Activated CD4-positive, alpha-beta T cell treated with anti-CD3 and anti-CD28 coated beads for 36 hours (primary cell): ENCODE measurements at regions of chr1 and their contacts with region 1.

Region 1: DNA sequence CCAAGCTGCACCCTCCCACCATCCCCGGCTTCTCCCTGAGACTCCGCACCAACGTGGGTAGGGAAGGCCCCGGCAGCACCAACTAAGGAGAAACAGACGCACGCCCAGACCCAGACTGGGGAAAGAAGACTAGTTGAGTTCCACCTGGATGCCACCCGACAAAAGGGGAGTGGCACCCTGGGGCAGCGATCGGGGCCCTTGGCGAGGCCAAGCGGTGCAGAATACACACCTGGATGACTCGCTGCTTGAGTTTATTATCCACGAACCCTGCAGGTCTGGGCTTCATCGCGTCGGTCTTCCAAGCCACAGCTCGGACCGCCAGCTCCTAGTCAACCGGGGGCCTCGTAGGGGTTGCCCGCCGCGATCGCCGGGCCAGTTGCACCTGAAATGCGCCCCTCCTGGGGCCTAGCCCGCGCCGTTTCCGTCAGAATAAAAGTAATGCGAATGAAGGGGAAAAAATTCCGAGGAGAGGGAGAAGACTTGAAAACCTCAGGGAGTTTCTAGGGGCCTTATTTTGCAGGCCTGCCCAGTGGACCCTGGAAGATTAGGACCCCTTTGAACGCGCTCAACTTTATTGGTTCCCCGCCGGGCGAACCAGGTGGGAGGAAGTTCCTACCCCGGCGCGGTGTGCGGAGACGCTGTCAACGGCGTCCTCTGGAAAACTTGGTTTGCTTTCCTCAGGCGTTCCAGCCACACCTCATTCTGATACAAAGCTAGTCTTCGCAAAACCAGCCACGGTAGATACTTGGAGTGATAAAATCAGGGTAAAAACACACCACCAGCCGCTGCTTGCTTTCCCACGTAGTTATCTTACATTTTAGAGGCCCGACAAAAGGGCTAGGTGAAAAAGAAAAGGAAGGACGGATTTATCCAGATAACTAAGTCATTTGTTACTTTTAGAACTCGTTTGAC is at the start of gene NVL:
- DNase-seq: peak; percentile 89
- ATAC-seq: peak; percentile 81
- H3K4me3 Mint-ChIP-seq: peak within 1 kb of the TSS; percentile 88
- H3K27ac Mint-ChIP-seq: peak within 1 kb of the TSS; percentile 92
- H3K4me1 Mint-ChIP-seq: peaks cover 36% of the 10 kb centered on the region
- H3K27me3 Mint-ChIP-seq: no peaks in the 10 kb centered on the region
- total RNA-seq, gene NVL: 34.2 to 44.1 TPM

Region 2: GRCh38 chr1:223142795-223143536 is 1187.1 kb before region 1 on chr1 and contains the start of gene TLR5:
- CTCF ChIA-PET with region 1: no interaction called
- POLR2A ChIA-PET with region 1: no interaction called
- intact Hi-C with region 1: no loop called
- DNase-seq: peak; percentile 93
- ATAC-seq: peak; percentile 89
- H3K4me3 Mint-ChIP-seq: peak within 1 kb of the TSS; percentile 69
- H3K27ac Mint-ChIP-seq: peak within 1 kb of the TSS; percentile 79
- H3K4me1 Mint-ChIP-seq: peaks cover 30% of the 10 kb centered on the region
- H3K27me3 Mint-ChIP-seq: peaks cover 2% of the 10 kb centered on the region
- total RNA-seq, gene TLR5: 0.21 to 0.56 TPM

Region 3: DNA sequence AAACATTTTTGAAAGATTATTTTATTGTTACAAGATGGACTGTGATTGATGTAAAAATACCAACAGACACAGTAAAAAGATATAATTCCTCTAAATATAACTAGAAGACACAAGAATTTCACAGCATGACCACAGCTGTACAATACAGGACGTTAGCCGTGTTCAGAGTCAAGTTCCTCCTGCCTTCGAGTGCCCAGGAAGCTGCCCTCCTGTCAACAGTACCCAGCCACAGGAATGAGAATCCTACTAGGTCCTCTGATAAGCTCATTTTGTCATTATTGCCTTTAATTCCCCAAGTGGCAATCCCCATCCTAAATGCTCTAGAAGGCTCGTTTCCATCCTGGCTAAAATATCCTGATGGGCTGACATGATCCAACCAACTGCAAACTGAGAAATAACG is 634.2 kb before region 1 on chr1:
- CTCF ChIA-PET with region 1: interaction called, 3 read pairs
- POLR2A ChIA-PET with region 1: no interaction called
- intact Hi-C with region 1: loop called (anchors 1 to 10 kb)
- DNase-seq: no peak
- ATAC-seq: no peak
- H3K4me3 Mint-ChIP-seq: no peak overlapping the region
- H3K27ac Mint-ChIP-seq: no peak overlapping the region
- H3K4me1 Mint-ChIP-seq: peaks cover 9% of the 10 kb centered on the region
- H3K27me3 Mint-ChIP-seq: peaks cover 4% of the 10 kb centered on the region

Region 4: GRCh38 chr1:224113918-224114786 is 215.9 kb before region 1 on chr1 and contains the start of gene FBXO28:
- CTCF ChIA-PET with region 1: interaction called, 52 read pairs
- POLR2A ChIA-PET with region 1: no interaction called
- intact Hi-C with region 1: loop called (anchors 1 kb)
- DNase-seq: peak; percentile 98
- ATAC-seq: peak; percentile 99
- H3K4me3 Mint-ChIP-seq: peak within 1 kb of the TSS; percentile 85
- H3K27ac Mint-ChIP-seq: peak within 1 kb of the TSS; percentile 96
- H3K4me1 Mint-ChIP-seq: peaks cover 25% of the 10 kb centered on the region
- H3K27me3 Mint-ChIP-seq: no peaks in the 10 kb centered on the region
- total RNA-seq, gene FBXO28: 17.1 to 19.7 TPM

Region 5: DNA sequence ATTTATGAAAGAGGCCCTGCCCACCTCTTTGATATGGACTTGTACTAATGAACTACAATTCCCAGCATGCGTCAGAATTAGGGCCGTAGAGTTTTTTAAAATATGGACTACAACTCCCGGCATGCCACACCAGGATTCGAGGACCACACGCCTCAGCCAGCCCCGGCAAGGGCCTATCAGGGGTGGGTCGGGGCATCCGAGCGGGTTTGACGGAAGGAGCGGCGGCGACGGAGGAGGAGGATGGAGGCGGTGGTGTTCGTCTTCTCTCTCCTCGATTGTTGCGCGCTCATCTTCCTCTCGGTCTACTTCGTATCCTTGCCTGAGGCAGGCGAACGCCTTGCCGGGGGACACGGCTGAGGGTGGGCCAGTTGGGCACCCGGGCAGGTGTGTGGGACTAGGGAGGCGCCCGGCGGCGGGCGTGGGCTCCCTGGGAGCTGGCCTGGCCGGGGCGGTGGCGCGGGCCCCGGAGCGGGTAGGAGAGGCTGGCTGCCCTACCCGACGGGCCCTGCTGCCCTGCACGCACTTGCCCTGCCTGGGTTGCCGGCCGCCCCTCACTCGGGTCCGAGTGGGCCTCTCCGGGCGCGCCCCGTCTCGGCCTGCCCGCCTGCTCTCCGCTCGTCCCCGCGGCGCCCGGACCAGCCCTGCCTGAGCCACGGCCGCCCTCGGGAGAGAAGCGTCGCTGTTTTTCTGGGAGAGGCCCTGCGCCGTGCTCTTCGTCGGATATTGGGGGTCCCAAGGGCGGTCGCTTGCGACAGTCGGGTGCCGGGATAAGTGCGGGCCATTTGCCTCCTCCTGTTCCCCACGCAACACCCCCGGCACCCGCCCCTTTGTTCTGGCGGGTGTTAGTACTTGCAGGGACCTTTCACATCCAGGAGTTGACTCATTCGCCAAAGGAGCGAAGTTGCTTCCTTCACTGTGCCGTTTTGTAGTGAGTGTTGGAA is 26.9 kb after region 1 on chr1 and contains the start of gene CNIH4:
- CTCF ChIA-PET with region 1: interaction called, 9 read pairs
- POLR2A ChIA-PET with region 1: no interaction called
- intact Hi-C with region 1: loop called (anchors 1 kb)
- DNase-seq: peak; percentile 95
- ATAC-seq: peak; percentile 98
- H3K4me3 Mint-ChIP-seq: peak within 1 kb of the TSS; percentile 80
- H3K27ac Mint-ChIP-seq: peak within 1 kb of the TSS; percentile 89
- H3K4me1 Mint-ChIP-seq: peaks cover 30% of the 10 kb centered on the region
- H3K27me3 Mint-ChIP-seq: no peaks in the 10 kb centered on the region
- total RNA-seq, gene CNIH4: 29.9 to 49.6 TPM

Region 6: DNA sequence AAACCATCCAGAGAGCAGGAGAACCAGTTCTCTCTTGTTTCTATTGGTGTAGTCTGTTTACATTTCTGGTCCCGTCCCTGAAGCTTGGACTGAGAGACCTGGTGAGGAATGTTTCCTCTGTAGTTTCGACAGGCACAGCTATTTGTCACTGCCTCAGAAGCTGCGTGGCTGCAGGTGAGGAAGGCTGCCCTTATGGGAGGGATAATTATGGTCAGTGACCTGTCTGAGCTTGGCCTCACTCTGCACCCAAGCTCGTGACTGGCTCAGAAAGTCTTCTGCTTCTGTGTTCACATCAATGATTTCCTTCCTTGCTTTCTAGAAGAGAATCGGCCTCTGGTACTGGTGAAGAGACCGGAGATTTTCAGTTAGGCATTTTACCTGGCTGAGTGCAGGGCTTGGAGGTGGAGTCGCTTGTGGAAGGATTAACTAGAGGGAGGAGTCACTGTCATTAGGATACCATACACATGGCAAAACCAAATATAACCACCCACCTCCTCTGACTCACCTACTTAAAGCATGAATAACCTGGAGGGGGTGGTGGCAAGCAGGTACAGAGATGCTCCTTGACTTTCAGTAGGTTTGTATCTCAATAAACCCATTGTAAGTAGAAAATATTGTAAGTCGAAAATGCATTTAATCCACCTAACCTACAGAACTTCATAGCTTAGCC is 124.4 kb after region 1 on chr1:
- CTCF ChIA-PET with region 1: interaction called, 6 read pairs
- POLR2A ChIA-PET with region 1: no interaction called
- intact Hi-C with region 1: loop called (anchors 2 kb)
- DNase-seq: no peak
- ATAC-seq: peak; percentile 37
- H3K4me3 Mint-ChIP-seq: no peak overlapping the region
- H3K27ac Mint-ChIP-seq: no peak overlapping the region
- H3K4me1 Mint-ChIP-seq: peaks cover 19% of the 10 kb centered on the region
- H3K27me3 Mint-ChIP-seq: no peaks in the 10 kb centered on the region

Region 7: DNA sequence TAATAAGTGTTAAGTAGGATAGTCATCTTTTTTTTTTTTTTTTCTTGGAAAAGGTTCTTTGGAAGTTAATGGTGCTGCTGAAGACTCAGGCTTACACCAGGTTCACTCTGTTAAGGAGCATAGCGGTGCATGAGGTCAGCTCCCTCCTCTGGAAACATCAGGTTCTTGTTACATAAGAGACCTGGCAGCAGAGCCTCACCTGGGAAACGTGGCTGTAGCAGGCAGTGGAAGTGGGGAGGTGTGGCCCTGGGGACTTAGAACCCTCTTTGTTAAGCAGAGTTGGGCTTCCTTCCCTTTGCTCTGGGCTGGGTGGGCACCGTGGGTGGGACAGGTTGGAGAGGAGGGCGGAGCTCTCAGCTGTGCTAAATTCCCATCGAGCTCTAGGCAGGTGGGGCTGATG is 390.1 kb after region 1 on chr1:
- CTCF ChIA-PET with region 1: no interaction called
- POLR2A ChIA-PET with region 1: no interaction called
- intact Hi-C with region 1: no loop called
- DNase-seq: no peak
- ATAC-seq: no peak
- H3K4me3 Mint-ChIP-seq: no peak overlapping the region
- H3K27ac Mint-ChIP-seq: no peak overlapping the region
- H3K4me1 Mint-ChIP-seq: no peaks in the 10 kb centered on the region
- H3K27me3 Mint-ChIP-seq: peaks cover 8% of the 10 kb centered on the region